Caco-2 (cell line): ENCODE measurements at regions of chr10 and their contacts with region 1.

Region 1: GRCh38 chr10:17175551-17175950 is 25.9 kb downstream of the TRDMT1 start:
- DNase-seq: no peak
- H3K4me3 ChIP-seq: no peak overlapping the region
- H3K4me3 Mint-ChIP-seq: no peak overlapping the region
- H3K27ac Mint-ChIP-seq: no peak overlapping the region
- H3K4me1 ChIP-seq: no peaks in the 10 kb centered on the region
- H3K4me1 Mint-ChIP-seq: no peaks in the 10 kb centered on the region
- H3K27me3 ChIP-seq: no peaks in the 10 kb centered on the region
- H3K27me3 Mint-ChIP-seq: no peaks in the 10 kb centered on the region
- CTCF ChIP-seq: no peak

Region 2: GRCh38 chr10:17059197-17059688 is 116.3 kb before region 1 on chr10:
- CTCF ChIA-PET with region 1: no interaction called
- POLR2A ChIA-PET with region 1: no interaction called
- intact Hi-C with region 1: loop called (anchors 5 kb)
- DNase-seq: peak in 1 of 2 experiments; percentile 13
- H3K4me3 ChIP-seq: no peak overlapping the region
- H3K4me3 Mint-ChIP-seq: no peak overlapping the region
- H3K27ac Mint-ChIP-seq: peak overlapping the region; percentile 17
- H3K4me1 ChIP-seq: peaks cover 23% of the 10 kb centered on the region
- H3K4me1 Mint-ChIP-seq: peaks cover 22% of the 10 kb centered on the region
- H3K27me3 ChIP-seq: no peaks in the 10 kb centered on the region
- H3K27me3 Mint-ChIP-seq: no peaks in the 10 kb centered on the region
- CTCF ChIP-seq: no peak

Region 3: GRCh38 chr10:17144757-17145156 is 30.8 kb before region 1 on chr10:
- CTCF ChIA-PET with region 1: no interaction called
- POLR2A ChIA-PET with region 1: no interaction called
- intact Hi-C with region 1: no loop called
- DNase-seq: no peak
- H3K4me3 ChIP-seq: no peak overlapping the region
- H3K4me3 Mint-ChIP-seq: no peak overlapping the region
- H3K27ac Mint-ChIP-seq: no peak overlapping the region
- H3K4me1 ChIP-seq: peaks cover 34% of the 10 kb centered on the region
- H3K4me1 Mint-ChIP-seq: peaks cover 45% of the 10 kb centered on the region
- H3K27me3 ChIP-seq: no peaks in the 10 kb centered on the region
- H3K27me3 Mint-ChIP-seq: no peaks in the 10 kb centered on the region
- CTCF ChIP-seq: no peak